ENCODE measurements at regions of chr17 and their contacts with region 1.

Region 1: GRCh38 chr17:78013683-78014467 is 55.4 kb downstream of the TNRC6C start:
- DNase-seq: peak; percentile 54
- ATAC-seq: peak; percentile 92
- H3K4me3 ChIP-seq: no peak overlapping the region
- H3K27ac ChIP-seq: no peak overlapping the region
- H3K4me1 ChIP-seq: no peaks in the 10 kb centered on the region
- H3K27me3 ChIP-seq: no peaks in the 10 kb centered on the region
- CTCF ChIP-seq: peak; percentile 87 to 100 (median 93)
- POLR2A ChIP-seq: no peak
- RAD21 ChIP-seq: peak; percentile 98

Region 2: DNA sequence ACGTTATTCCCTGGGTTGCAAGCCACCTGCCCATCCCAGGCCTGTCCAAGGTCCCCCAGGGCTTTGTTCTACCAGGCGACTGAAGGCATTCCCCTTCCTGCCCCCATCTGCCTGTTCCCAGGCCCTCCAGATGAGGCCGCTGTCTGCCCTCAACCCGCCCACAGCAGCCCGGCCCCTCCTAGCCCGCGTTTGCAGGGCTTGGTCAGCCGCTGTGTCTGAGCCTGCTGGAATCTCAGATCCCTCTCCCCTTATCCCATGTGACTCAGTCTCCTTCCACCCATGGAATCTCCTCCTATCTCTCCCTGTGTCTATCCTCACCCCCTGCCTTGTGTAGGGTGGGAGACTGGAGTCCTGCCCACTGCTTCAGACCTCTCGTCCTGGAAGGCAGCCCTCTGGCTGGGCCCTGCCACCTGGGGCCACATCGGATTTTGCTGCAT is 241.4 kb before region 1 on chr17:
- CTCF ChIA-PET with region 1: interaction called, 20 read pairs
- POLR2A ChIA-PET with region 1: interaction called, 3 read pairs
- RAD21 ChIA-PET with region 1: no interaction called
- intact Hi-C with region 1: loop called (anchors 1 kb)
- DNase-seq: peak; percentile 32
- ATAC-seq: peak; percentile 99
- H3K4me3 ChIP-seq: no peak overlapping the region
- H3K27ac ChIP-seq: no peak overlapping the region
- H3K4me1 ChIP-seq: peaks cover 0 to 19% of the 10 kb centered on the region in 2 experiments; a peak in 2 of 4 replicates
- H3K27me3 ChIP-seq: no peaks in the 10 kb centered on the region; the same call in 1 of the 2 replicates
- CTCF ChIP-seq: peak; percentile 87 to 99 (median 95); a peak in 5 of 6 replicates
- POLR2A ChIP-seq: no peak
- RAD21 ChIP-seq: peak; percentile 99

Region 3: DNA sequence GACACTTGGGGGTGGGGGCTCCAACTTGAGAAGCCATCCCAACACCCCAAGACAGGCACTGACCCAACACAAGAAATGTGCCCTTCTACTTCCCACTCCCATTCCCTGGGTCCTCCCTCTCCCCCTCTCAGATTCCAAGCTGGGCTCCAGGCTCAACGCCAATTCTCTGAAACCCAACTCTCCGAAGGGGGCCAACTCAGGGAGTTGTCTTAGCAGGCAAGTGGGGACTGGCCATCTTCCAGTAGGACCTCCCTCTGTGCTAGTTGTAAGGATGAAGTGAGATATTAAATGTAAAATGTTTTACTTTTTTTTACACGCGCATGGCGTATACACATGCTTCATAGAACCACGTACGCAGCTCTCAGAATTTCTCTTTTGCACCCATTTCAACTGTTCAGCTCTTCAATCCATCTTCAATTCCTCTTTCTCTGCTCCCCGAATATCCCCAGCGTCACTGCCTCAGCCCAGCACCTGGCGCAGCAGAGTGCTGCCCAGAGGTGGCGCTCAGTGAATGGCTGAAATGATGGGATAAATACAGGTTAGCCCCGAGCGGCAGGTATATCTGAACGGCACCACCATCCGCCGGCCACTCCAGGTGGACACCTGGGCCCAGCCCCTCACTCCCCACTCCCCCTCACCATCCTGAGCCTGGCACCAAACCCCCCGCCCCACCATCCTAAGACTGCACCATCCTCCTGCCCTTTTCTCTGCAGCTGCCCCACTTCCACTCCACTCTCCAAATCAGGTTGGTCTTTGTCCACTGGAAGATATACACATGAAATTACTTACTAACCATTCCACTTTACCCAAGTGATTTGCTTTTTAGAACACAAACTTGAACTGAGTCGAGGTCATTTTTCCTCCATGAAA is 99.3 kb before region 1 on chr17:
- CTCF ChIA-PET with region 1: interaction called, 5 read pairs
- POLR2A ChIA-PET with region 1: no interaction called
- RAD21 ChIA-PET with region 1: interaction called, 6 to 10 read pairs
- intact Hi-C with region 1: loop called (anchors 1 kb)
- DNase-seq: peak; percentile 7
- ATAC-seq: peak; percentile 100
- H3K4me3 ChIP-seq: no peak overlapping the region
- H3K27ac ChIP-seq: no peak overlapping the region
- H3K4me1 ChIP-seq: peaks cover 0 to 4% of the 10 kb centered on the region in 2 experiments; a peak in 1 of 4 replicates
- H3K27me3 ChIP-seq: peaks cover 31% of the 10 kb centered on the region
- CTCF ChIP-seq: peak; percentile 55 to 64 (median 64); a peak in 5 of 6 replicates
- POLR2A ChIP-seq: no peak
- RAD21 ChIP-seq: peak; percentile 81

Region 4: GRCh38 chr17:78324391-78325075 is 310.7 kb after region 1 on chr17:
- CTCF ChIA-PET with region 1: no interaction called
- POLR2A ChIA-PET with region 1: no interaction called
- RAD21 ChIA-PET with region 1: no interaction called
- intact Hi-C with region 1: no loop called
- DNase-seq: no peak
- ATAC-seq: no peak
- H3K4me3 ChIP-seq: no peak overlapping the region
- H3K27ac ChIP-seq: peak overlapping the region; percentile 47
- H3K4me1 ChIP-seq: peaks cover 31 to 66% of the 10 kb centered on the region in 2 experiments
- H3K27me3 ChIP-seq: no peaks in the 10 kb centered on the region
- CTCF ChIP-seq: no peak
- POLR2A ChIP-seq: no peak
- RAD21 ChIP-seq: no peak